ENCODE measurements at regions of chr22 and their contacts with region 1.

Region 1: DNA sequence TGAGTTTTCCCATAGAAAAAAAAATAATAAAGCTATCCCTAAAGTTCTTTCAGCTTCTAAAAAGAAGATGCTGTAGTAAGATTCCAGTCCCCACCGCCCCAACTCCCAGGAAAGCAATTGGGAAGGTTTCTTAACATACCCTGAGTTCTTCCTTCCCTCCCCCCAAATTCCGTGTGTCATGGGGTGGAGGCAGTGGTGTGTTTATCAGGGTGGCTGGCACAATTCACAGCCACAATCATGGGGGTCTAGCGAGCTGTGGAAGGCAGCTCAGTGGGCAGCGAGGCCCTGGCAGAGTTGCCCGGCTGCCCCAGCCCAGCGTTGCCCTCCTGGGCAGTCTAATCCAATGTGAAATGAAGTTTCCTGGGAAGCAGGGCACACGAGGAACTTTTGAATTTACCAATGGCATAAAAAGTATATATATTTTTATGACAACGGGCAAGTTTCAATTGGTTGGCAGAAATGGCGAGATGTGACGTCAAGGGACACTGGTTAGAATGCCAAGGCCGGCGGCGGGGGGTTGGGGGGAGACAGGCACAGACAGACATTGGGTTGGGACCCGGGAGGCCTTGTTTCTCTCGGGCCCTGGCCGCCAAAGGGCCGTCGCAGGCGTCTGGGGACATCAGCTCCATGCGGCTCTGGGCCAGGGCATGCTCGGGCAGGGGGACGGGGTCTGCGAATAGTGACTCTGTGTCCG is 80.7 kb upstream of the PPARA start:
- DNase-seq: peak; percentile 84
- ATAC-seq: peak; percentile 44
- H3K4me3 ChIP-seq: peak overlapping the region; percentile 52 to 60
- H3K27ac ChIP-seq: peak overlapping the region; percentile 100
- H3K4me1 ChIP-seq: peaks cover 10% of the 10 kb centered on the region
- H3K27me3 ChIP-seq: no peaks in the 10 kb centered on the region
- CTCF ChIP-seq: no peak

Region 2: GRCh38 chr22:46006379-46007002 is 63.2 kb before region 1 on chr22:
- CTCF ChIA-PET with region 1: no interaction called
- POLR2A ChIA-PET with region 1: interaction called, 20 read pairs
- in situ Hi-C with region 1: no loop called
- intact Hi-C with region 1: loop called (anchors 5 kb)
- DNase-seq: no peak
- ATAC-seq: peak; percentile 81
- H3K4me3 ChIP-seq: peak overlapping the region in 1 of 2 experiments; percentile 32; a peak in 2 of 4 replicates
- H3K27ac ChIP-seq: peak overlapping the region; percentile 87
- H3K4me1 ChIP-seq: peaks cover 28% of the 10 kb centered on the region
- H3K27me3 ChIP-seq: no peaks in the 10 kb centered on the region
- CTCF ChIP-seq: peak; percentile 90

Region 3: DNA sequence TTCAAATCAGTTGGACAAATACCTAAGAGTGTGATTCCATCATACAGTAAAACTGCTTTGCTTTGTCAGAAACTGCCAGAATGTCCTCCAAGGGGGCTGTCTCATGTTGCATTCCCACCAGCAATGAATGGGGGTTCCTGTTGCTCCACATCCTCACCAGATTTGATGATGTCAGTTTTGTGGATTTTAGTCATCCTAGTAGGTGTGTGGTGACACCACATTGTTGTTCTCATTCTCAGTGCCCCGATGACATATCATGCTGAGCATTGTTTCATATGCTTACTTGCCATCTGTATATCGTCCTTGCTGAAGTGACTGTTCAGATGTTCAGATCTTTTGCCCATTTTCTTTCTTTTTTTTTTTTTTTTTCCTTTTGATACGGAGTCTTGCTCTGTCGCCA is 143.4 kb after region 1 on chr22:
- CTCF ChIA-PET with region 1: no interaction called
- POLR2A ChIA-PET with region 1: no interaction called
- in situ Hi-C with region 1: no loop called
- intact Hi-C with region 1: no loop called
- DNase-seq: no peak
- ATAC-seq: no peak
- H3K4me3 ChIP-seq: no peak overlapping the region
- H3K27ac ChIP-seq: no peak overlapping the region
- H3K4me1 ChIP-seq: no peaks in the 10 kb centered on the region
- H3K27me3 ChIP-seq: no peaks in the 10 kb centered on the region
- CTCF ChIP-seq: no peak

Measured in Panc1 (cell line).